MCF 10A (cell line): ENCODE measurements at regions of chr5 and their contacts with region 1.

Region 1: GRCh38 chr5:65774346-65774745 is 52.3 kb downstream of the NLN start:
- DNase-seq: peak; percentile 74
- H3K4me3 Mint-ChIP-seq: no peak overlapping the region
- H3K27ac Mint-ChIP-seq: peak overlapping the region; percentile 59
- H3K4me1 Mint-ChIP-seq: peaks cover 11% of the 10 kb centered on the region
- H3K27me3 Mint-ChIP-seq: no peaks in the 10 kb centered on the region
- CTCF ChIP-seq: no peak

Region 2: GRCh38 chr5:65742565-65743231 is 31.6 kb before region 1 on chr5:
- CTCF ChIA-PET with region 1: interaction called, 10 read pairs
- POLR2A ChIA-PET with region 1: interaction called, 4 read pairs
- intact Hi-C with region 1: no loop called
- DNase-seq: peak; percentile 72
- H3K4me3 Mint-ChIP-seq: no peak overlapping the region
- H3K27ac Mint-ChIP-seq: no peak overlapping the region
- H3K4me1 Mint-ChIP-seq: peaks cover 18% of the 10 kb centered on the region
- H3K27me3 Mint-ChIP-seq: no peaks in the 10 kb centered on the region
- CTCF ChIP-seq: peak; percentile 65

Region 3: GRCh38 chr5:65811004-65811403 is 36.7 kb after region 1 on chr5:
- CTCF ChIA-PET with region 1: interaction called, 3 read pairs
- POLR2A ChIA-PET with region 1: interaction called, 16 read pairs
- intact Hi-C with region 1: no loop called
- DNase-seq: peak; percentile 75
- H3K4me3 Mint-ChIP-seq: no peak overlapping the region
- H3K27ac Mint-ChIP-seq: peak overlapping the region; percentile 25
- H3K4me1 Mint-ChIP-seq: peaks cover 9% of the 10 kb centered on the region
- H3K27me3 Mint-ChIP-seq: no peaks in the 10 kb centered on the region
- CTCF ChIP-seq: no peak